ENCODE measurements at regions of chr21 and their contacts with region 1.

Region 1: GRCh38 chr21:43916691-43917514 is 51.9 kb downstream of the AGPAT3 start:
- DNase-seq: peak; percentile 84
- ATAC-seq: peak; percentile 83
- H3K4me3 Mint-ChIP-seq: peak overlapping the region; percentile 81
- H3K27ac Mint-ChIP-seq: peak overlapping the region; percentile 78
- H3K4me1 Mint-ChIP-seq: peaks cover 61% of the 10 kb centered on the region
- H3K27me3 Mint-ChIP-seq: no peaks in the 10 kb centered on the region

Region 2: GRCh38 chr21:43854773-43855633 is 61.9 kb before region 1 on chr21:
- CTCF ChIA-PET with region 1: no interaction called
- POLR2A ChIA-PET with region 1: no interaction called
- intact Hi-C with region 1: loop called in 1 of 2 experiments (anchors 2 kb)
- DNase-seq: peak; percentile 78
- ATAC-seq: peak; percentile 97
- H3K4me3 Mint-ChIP-seq: peak overlapping the region; percentile 9
- H3K27ac Mint-ChIP-seq: peak overlapping the region; percentile 80
- H3K4me1 Mint-ChIP-seq: peaks cover 25% of the 10 kb centered on the region
- H3K27me3 Mint-ChIP-seq: peaks cover 11% of the 10 kb centered on the region

Region 3: GRCh38 chr21:43893536-43894205 is 23.2 kb before region 1 on chr21:
- CTCF ChIA-PET with region 1: no interaction called
- POLR2A ChIA-PET with region 1: interaction called, 3 read pairs
- intact Hi-C with region 1: loop called in 1 of 2 experiments (anchors 1 kb)
- DNase-seq: peak; percentile 72
- ATAC-seq: peak; percentile 95
- H3K4me3 Mint-ChIP-seq: peak overlapping the region; percentile 70
- H3K27ac Mint-ChIP-seq: peak overlapping the region; percentile 90
- H3K4me1 Mint-ChIP-seq: peaks cover 47% of the 10 kb centered on the region
- H3K27me3 Mint-ChIP-seq: no peaks in the 10 kb centered on the region

Region 4: DNA sequence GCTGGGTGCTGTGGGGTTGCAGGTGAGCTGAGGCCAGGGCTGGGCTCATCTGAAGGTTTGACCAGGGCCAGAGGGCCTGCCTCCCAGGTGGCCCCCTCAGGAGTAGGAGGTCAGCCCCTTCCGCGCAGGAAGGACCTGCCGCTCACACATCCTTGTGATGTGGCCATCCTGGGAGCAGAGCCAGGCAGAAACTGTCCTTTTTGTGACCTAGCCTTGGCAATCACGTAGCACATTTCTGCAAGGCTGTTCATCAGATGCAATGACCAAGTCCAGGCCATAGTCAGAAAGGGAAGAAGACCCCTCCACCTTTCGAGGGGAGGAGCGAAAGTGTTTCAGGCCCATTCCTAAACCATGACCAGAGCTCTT is 39.8 kb after region 1 on chr21:
- CTCF ChIA-PET with region 1: interaction called, 3 read pairs
- POLR2A ChIA-PET with region 1: interaction called, 3 read pairs
- intact Hi-C with region 1: loop called (anchors 1 to 5 kb)
- DNase-seq: no peak
- ATAC-seq: no peak
- H3K4me3 Mint-ChIP-seq: no peak overlapping the region
- H3K27ac Mint-ChIP-seq: peak overlapping the region; percentile 53
- H3K4me1 Mint-ChIP-seq: peaks cover 23% of the 10 kb centered on the region
- H3K27me3 Mint-ChIP-seq: no peaks in the 10 kb centered on the region

Region 5: DNA sequence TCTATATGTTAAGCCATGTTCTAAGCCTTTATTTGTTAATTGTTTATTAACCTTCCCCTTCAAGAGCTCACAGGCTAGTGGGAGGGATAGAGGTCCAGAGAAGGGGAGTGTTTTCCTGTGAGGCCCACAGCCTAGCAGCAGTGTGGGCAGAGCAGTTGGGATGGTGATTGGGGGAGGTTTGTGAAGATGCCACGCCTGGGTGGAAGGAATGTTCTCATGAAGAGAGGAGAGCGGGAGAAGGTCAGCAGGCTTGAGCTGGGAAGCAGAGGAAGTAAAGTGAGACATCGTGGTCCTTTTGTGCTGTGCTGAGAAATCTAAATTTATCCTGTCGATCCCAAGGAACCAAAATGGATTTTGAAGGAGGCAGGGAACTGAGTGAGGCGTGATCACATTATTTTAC is 137.8 kb after region 1 on chr21:
- CTCF ChIA-PET with region 1: no interaction called
- POLR2A ChIA-PET with region 1: no interaction called
- intact Hi-C with region 1: no loop called
- DNase-seq: no peak
- ATAC-seq: no peak
- H3K4me3 Mint-ChIP-seq: no peak overlapping the region
- H3K27ac Mint-ChIP-seq: peak overlapping the region; percentile 80
- H3K4me1 Mint-ChIP-seq: peaks cover 28% of the 10 kb centered on the region
- H3K27me3 Mint-ChIP-seq: no peaks in the 10 kb centered on the region